T-cell (primary cell): ENCODE measurements at regions of chr14 and their contacts with region 1.

Region 1: GRCh38 chr14:67108230-67108629 is 81.0 kb upstream of the GARIN2 start:
- DNase-seq: no peak
- ATAC-seq: no peak
- H3K4me3 ChIP-seq: no peak overlapping the region
- H3K4me3 Mint-ChIP-seq: no peak overlapping the region
- H3K27ac ChIP-seq: no peak overlapping the region
- H3K27ac Mint-ChIP-seq: no peak overlapping the region
- H3K4me1 ChIP-seq: no peaks in the 10 kb centered on the region
- H3K4me1 Mint-ChIP-seq: no peaks in the 10 kb centered on the region
- H3K27me3 ChIP-seq: peaks cover 0 to 4% of the 10 kb centered on the region in 2 experiments
- H3K27me3 Mint-ChIP-seq: no peaks in the 10 kb centered on the region

Region 2: GRCh38 chr14:65756880-65757279 is 1351.3 kb before region 1 on chr14:
- CTCF ChIA-PET with region 1: no interaction called
- POLR2A ChIA-PET with region 1: interaction called in 1 of 2 experiments, 10 read pairs
- DNase-seq: no peak
- ATAC-seq: no peak
- H3K4me3 ChIP-seq: no peak overlapping the region
- H3K4me3 Mint-ChIP-seq: no peak overlapping the region
- H3K27ac ChIP-seq: no peak overlapping the region
- H3K27ac Mint-ChIP-seq: no peak overlapping the region
- H3K4me1 ChIP-seq: no peaks in the 10 kb centered on the region
- H3K4me1 Mint-ChIP-seq: peaks cover 0 to under 1% (median 0%) of the 10 kb centered on the region in 3 donors
- H3K27me3 ChIP-seq: no peaks in the 10 kb centered on the region
- H3K27me3 Mint-ChIP-seq: no peaks in the 10 kb centered on the region